ENCODE measurements at regions of chr20 and their contacts with region 1.

Region 1: GRCh38 chr20:7926767-7927166 is 13.5 kb downstream of the HAO1 start:
- DNase-seq: peak; percentile 75
- H3K4me3 ChIP-seq: no peak overlapping the region
- H3K27ac ChIP-seq: peak overlapping the region; percentile 92
- H3K4me1 ChIP-seq: peaks cover 26% of the 10 kb centered on the region
- H3K27me3 ChIP-seq: no peaks in the 10 kb centered on the region
- CTCF ChIP-seq: peak; percentile 47 to 52
- POLR2A ChIP-seq: no peak

Region 2: DNA sequence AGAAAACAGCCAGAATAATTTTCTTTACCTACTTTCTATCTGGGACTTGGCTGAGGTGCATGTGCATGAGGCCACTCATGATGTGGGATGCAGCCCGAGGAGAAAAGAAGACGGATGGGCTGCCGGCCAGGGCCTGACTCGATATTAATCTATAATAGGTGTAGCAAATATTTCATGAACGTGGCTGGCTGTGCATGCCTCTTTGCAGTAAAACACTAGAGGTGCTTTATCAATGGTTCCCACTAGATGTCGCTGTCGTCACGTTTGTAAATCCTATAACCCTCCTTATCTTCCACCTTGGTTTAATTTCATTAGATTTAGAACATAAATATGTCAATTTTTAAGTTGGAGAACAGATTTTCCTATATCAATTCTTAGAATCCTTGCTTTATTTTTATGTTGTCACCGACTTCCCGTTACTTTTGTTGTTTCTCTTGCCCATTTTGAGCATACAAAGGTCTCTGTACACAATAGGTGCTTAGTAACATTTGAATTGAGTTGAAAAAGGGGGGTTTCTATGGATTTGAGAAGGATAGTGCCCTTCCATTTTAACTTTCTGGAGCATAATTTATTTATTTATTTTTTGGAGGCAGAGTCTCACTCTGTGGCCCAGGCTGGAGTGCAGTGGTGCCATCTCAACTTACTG is 1784.3 kb before region 1 on chr20:
- CTCF ChIA-PET with region 1: interaction called, 3 read pairs
- POLR2A ChIA-PET with region 1: no interaction called
- dilution Hi-C with region 1: no loop called
- intact Hi-C with region 1: loop called (anchors 5 kb)
- DNase-seq: peak; percentile 64
- H3K4me3 ChIP-seq: no peak overlapping the region
- H3K27ac ChIP-seq: no peak overlapping the region
- H3K4me1 ChIP-seq: no peaks in the 10 kb centered on the region
- H3K27me3 ChIP-seq: peaks cover 0 to 10% of the 10 kb centered on the region in 2 experiments
- CTCF ChIP-seq: peak; percentile 58 to 68
- POLR2A ChIP-seq: no peak

Region 3: GRCh38 chr20:6636209-6637159 is 1290.3 kb before region 1 on chr20:
- CTCF ChIA-PET with region 1: interaction called, 3 read pairs
- POLR2A ChIA-PET with region 1: no interaction called
- dilution Hi-C with region 1: no loop called
- intact Hi-C with region 1: loop called (anchors 5 kb)
- DNase-seq: peak; percentile 85
- H3K4me3 ChIP-seq: no peak overlapping the region
- H3K27ac ChIP-seq: no peak overlapping the region
- H3K4me1 ChIP-seq: no peaks in the 10 kb centered on the region
- H3K27me3 ChIP-seq: no peaks in the 10 kb centered on the region
- CTCF ChIP-seq: peak; percentile 52 to 62
- POLR2A ChIP-seq: no peak

Region 4: GRCh38 chr20:6828794-6829423 is 1097.9 kb before region 1 on chr20:
- CTCF ChIA-PET with region 1: interaction called, 26 read pairs
- POLR2A ChIA-PET with region 1: no interaction called
- dilution Hi-C with region 1: no loop called
- intact Hi-C with region 1: loop called (anchors 1 kb)
- DNase-seq: peak; percentile 85
- H3K4me3 ChIP-seq: no peak overlapping the region
- H3K27ac ChIP-seq: no peak overlapping the region
- H3K4me1 ChIP-seq: no peaks in the 10 kb centered on the region
- H3K27me3 ChIP-seq: no peaks in the 10 kb centered on the region
- CTCF ChIP-seq: peak; percentile 56 to 59
- POLR2A ChIP-seq: no peak

Region 5: GRCh38 chr20:7399575-7399974 is 527.2 kb before region 1 on chr20:
- CTCF ChIA-PET with region 1: interaction called, 3 read pairs
- POLR2A ChIA-PET with region 1: no interaction called
- dilution Hi-C with region 1: no loop called
- intact Hi-C with region 1: loop called (anchors 1 kb)
- DNase-seq: peak; percentile 79
- H3K4me3 ChIP-seq: no peak overlapping the region
- H3K27ac ChIP-seq: peak overlapping the region; percentile 59
- H3K4me1 ChIP-seq: peaks cover 15% of the 10 kb centered on the region
- H3K27me3 ChIP-seq: peaks cover 0 to 2% of the 10 kb centered on the region in 2 experiments
- CTCF ChIP-seq: no peak
- POLR2A ChIP-seq: no peak

Region 6: GRCh38 chr20:7627734-7628663 is 298.8 kb before region 1 on chr20:
- CTCF ChIA-PET with region 1: interaction called, 5 read pairs
- POLR2A ChIA-PET with region 1: no interaction called
- dilution Hi-C with region 1: no loop called
- intact Hi-C with region 1: loop called (anchors 1 kb)
- DNase-seq: peak; percentile 99
- H3K4me3 ChIP-seq: no peak overlapping the region
- H3K27ac ChIP-seq: peak overlapping the region; percentile 97
- H3K4me1 ChIP-seq: peaks cover 28% of the 10 kb centered on the region
- H3K27me3 ChIP-seq: no peaks in the 10 kb centered on the region
- CTCF ChIP-seq: no peak
- POLR2A ChIP-seq: no peak

Region 7: DNA sequence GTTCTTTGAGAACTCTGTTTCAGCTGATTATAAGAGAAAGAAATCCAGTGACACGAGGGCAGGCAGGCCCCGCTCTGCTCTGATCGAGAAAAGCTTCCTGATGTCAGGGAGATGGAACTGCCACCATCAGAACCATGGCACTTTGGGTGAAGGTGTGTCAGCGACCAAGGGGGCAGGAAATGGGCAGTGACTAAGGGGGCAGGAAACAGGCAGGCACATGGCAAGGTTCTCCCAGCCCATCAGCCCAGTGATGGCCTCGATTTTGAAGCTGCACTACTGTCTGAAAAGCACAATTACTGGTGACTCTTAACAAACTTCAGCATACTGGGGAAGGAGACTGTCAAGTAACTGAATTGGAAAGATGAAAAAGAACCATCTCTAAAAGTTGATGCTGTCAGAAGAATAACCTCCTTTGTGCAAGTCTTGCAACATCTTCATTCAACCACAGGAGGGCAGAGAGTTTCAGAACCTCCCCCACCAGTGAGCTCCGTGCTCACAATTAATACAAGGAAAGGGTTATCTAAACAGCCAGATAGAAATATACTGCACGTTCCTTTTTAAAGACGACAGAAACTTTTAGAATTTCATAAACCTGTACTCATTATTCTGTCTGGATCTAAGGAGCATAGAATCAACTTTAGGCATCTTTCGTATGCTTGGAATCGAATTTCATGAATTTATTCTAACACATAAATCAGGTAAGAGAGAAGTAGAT is 53.7 kb after region 1 on chr20:
- CTCF ChIA-PET with region 1: no interaction called
- POLR2A ChIA-PET with region 1: no interaction called
- dilution Hi-C with region 1: no loop called
- intact Hi-C with region 1: no loop called
- DNase-seq: peak; percentile 58
- H3K4me3 ChIP-seq: no peak overlapping the region
- H3K27ac ChIP-seq: no peak overlapping the region
- H3K4me1 ChIP-seq: no peaks in the 10 kb centered on the region
- H3K27me3 ChIP-seq: no peaks in the 10 kb centered on the region
- CTCF ChIP-seq: peak; percentile 52 to 53
- POLR2A ChIP-seq: no peak